A673 (cell line): ENCODE measurements at regions of chr6 and their contacts with region 1.

Region 1: DNA sequence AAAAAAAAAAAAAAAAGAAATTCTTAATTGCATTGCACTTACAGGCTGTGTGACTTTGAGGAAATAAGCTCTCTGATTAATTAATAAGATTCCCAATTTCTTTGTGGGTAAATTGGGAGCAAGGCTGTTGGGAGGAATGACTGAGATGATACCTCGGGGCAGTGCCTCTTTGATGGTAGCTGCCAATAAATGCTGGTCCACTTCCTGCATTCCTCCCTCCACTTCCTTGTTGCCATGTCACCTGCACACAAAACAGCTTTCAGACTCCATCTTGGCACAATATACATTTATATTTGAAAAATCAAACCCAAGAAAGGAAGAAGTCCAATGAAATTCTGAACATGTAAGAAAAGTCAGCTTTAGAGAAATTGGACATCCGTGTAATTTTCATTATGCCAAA is 45.1 kb downstream of the MTHFD1L start:
- DNase-seq: no peak
- H3K4me3 ChIP-seq: no peak overlapping the region
- H3K27ac ChIP-seq: no peak overlapping the region
- H3K4me1 ChIP-seq: no peaks in the 10 kb centered on the region
- H3K27me3 ChIP-seq: no peaks in the 10 kb centered on the region
- CTCF ChIP-seq: no peak

Region 2: GRCh38 chr6:150800674-150801314 is 109.8 kb before region 1 on chr6:
- CTCF ChIA-PET with region 1: no interaction called
- POLR2A ChIA-PET with region 1: no interaction called
- intact Hi-C with region 1: no loop called
- DNase-seq: no peak
- H3K4me3 ChIP-seq: no peak overlapping the region
- H3K27ac ChIP-seq: peak overlapping the region; percentile 62
- H3K4me1 ChIP-seq: peaks cover 24% of the 10 kb centered on the region
- H3K27me3 ChIP-seq: no peaks in the 10 kb centered on the region
- CTCF ChIP-seq: no peak

Region 3: GRCh38 chr6:150924808-150925589 is 14.4 kb after region 1 on chr6:
- CTCF ChIA-PET with region 1: no interaction called
- POLR2A ChIA-PET with region 1: interaction called, 13 read pairs
- intact Hi-C with region 1: no loop called
- DNase-seq: no peak
- H3K4me3 ChIP-seq: no peak overlapping the region
- H3K27ac ChIP-seq: no peak overlapping the region
- H3K4me1 ChIP-seq: no peaks in the 10 kb centered on the region
- H3K27me3 ChIP-seq: no peaks in the 10 kb centered on the region
- CTCF ChIP-seq: no peak